IMR-90 (cell line): ENCODE measurements at regions of chr1 and their contacts with region 1.

Region 1: GRCh38 chr1:72442262-72442661 is 159.9 kb upstream of the NEGR1 start:
- DNase-seq: peak; percentile 26
- ATAC-seq: peak; percentile 35; the same call in 1 of the 2 replicates
- H3K4me3 ChIP-seq: no peak overlapping the region
- H3K27ac ChIP-seq: no peak overlapping the region
- H3K4me1 ChIP-seq: peaks cover 2% of the 10 kb centered on the region; the same call in 1 of the 2 replicates
- H3K27me3 ChIP-seq: no peaks in the 10 kb centered on the region
- CTCF ChIP-seq: no peak
- POLR2A ChIP-seq: no peak
- RAD21 ChIP-seq: no peak

Region 2: GRCh38 chr1:72462186-72462905 is 20.1 kb after region 1 on chr1:
- CTCF ChIA-PET with region 1: interaction called, 3 read pairs
- POLR2A ChIA-PET with region 1: interaction called, 17 read pairs
- dilution Hi-C with region 1: no loop called
- in situ Hi-C with region 1: no loop called
- intact Hi-C with region 1: no loop called
- DNase-seq: no peak
- ATAC-seq: no peak
- H3K4me3 ChIP-seq: no peak overlapping the region
- H3K27ac ChIP-seq: no peak overlapping the region
- H3K4me1 ChIP-seq: no peaks in the 10 kb centered on the region
- H3K27me3 ChIP-seq: no peaks in the 10 kb centered on the region
- CTCF ChIP-seq: no peak
- POLR2A ChIP-seq: no peak
- RAD21 ChIP-seq: no peak